CD4-positive, alpha-beta memory T cell (primary cell): ENCODE measurements at regions of chr1 and their contacts with region 1.

Region 1: DNA sequence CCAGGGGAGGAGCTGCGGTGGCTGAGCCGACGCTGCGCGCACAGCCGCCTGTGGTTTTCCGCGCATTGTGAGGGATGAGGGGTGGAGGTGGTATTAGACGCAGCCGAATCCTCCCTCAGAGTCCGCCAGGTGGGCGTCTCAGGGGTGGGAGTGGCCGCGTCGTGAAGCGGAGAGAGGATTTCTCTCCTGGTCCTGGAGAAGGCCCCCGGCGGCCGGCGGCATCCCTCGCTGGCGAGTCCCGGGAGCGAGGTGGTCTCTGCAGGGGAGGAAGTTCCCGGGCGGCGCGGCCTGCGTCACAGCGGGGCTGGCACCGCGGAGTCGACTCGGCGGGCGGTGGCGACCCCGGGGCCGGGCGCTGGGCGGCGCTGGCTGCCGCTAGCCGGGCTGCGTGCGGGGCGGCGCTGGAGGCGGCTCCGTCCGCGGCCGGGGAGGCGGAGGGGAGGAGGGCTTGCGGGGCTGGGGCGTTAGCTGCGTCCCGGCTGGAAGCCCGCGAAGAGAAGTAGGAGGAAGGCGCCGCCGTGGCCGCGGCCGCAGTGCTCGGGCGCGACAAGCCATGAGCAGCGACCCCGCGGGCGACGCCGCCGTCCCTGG is at the start of gene LRRC8C:
- DNase-seq: peak; percentile 90 to 95 (median 92)
- H3K4me3 ChIP-seq: peak within 1 kb of the TSS; percentile 73 to 89
- H3K4me3 Mint-ChIP-seq: peak within 1 kb of the TSS; percentile 96 to 99 (median 98)
- H3K27ac ChIP-seq: peak within 1 kb of the TSS; percentile 96
- H3K27ac Mint-ChIP-seq: peak within 1 kb of the TSS; percentile 96 to 99 (median 98)
- H3K4me1 ChIP-seq: peaks cover 76% of the 10 kb centered on the region
- H3K4me1 Mint-ChIP-seq: peaks cover 60 to 90% (median 74%) of the 10 kb centered on the region in 4 donors
- H3K27me3 ChIP-seq: no peaks in the 10 kb centered on the region
- H3K27me3 Mint-ChIP-seq: no peaks in the 10 kb centered on the region
- total RNA-seq, gene LRRC8C: 56.7 to 57.1 TPM

Region 2: GRCh38 chr1:89598450-89599331 is 34.1 kb before region 1 on chr1:
- CTCF ChIA-PET with region 1: interaction called, 688 read pairs
- POLR2A ChIA-PET with region 1: interaction called, 813 read pairs
- intact Hi-C with region 1: no loop called
- DNase-seq: peak in 4 of 5 donors; percentile 32 to 49 (median 38)
- H3K4me3 ChIP-seq: no peak overlapping the region
- H3K4me3 Mint-ChIP-seq: peak overlapping the region in 5 of 8 donors; percentile 37 to 79 (median 45)
- H3K27ac ChIP-seq: no peak overlapping the region
- H3K27ac Mint-ChIP-seq: peak overlapping the region; percentile 19 to 81 (median 71)
- H3K4me1 ChIP-seq: peaks cover 64% of the 10 kb centered on the region
- H3K4me1 Mint-ChIP-seq: peaks cover 55 to 82% (median 74%) of the 10 kb centered on the region in 4 donors
- H3K27me3 ChIP-seq: no peaks in the 10 kb centered on the region
- H3K27me3 Mint-ChIP-seq: no peaks in the 10 kb centered on the region

Region 3: DNA sequence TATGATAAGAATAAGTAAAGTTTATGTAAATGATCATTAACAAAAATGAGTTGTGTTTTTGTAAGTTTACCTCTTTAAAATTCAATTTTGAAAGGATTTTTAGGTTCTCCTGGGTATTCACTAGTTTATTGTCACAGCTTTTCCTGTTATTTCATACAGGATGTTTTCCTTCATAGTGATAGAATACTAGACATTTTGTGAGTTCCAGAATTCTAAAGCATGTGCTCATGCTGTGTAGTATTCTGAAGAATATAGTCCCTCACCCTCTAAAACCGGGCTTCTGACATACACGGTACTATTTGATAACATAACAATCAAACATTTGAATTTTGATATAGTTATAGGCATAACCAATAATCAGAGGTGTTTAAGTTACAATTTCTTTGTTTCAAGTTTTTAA is 10.8 kb after region 1 on chr1:
- CTCF ChIA-PET with region 1: interaction called, 5 read pairs
- POLR2A ChIA-PET with region 1: interaction called, 257 read pairs
- intact Hi-C with region 1: loop called (anchors 1 kb)
- DNase-seq: no peak
- H3K4me3 ChIP-seq: no peak overlapping the region
- H3K4me3 Mint-ChIP-seq: peak overlapping the region in 3 of 8 donors; percentile 14 to 61 (median 54)
- H3K27ac ChIP-seq: peak overlapping the region; percentile 3
- H3K27ac Mint-ChIP-seq: peak overlapping the region in 4 of 7 donors; percentile 6 to 59 (median 48)
- H3K4me1 ChIP-seq: peaks cover 64% of the 10 kb centered on the region
- H3K4me1 Mint-ChIP-seq: peaks cover 35 to 70% (median 58%) of the 10 kb centered on the region in 4 donors
- H3K27me3 ChIP-seq: no peaks in the 10 kb centered on the region
- H3K27me3 Mint-ChIP-seq: no peaks in the 10 kb centered on the region

Region 4: DNA sequence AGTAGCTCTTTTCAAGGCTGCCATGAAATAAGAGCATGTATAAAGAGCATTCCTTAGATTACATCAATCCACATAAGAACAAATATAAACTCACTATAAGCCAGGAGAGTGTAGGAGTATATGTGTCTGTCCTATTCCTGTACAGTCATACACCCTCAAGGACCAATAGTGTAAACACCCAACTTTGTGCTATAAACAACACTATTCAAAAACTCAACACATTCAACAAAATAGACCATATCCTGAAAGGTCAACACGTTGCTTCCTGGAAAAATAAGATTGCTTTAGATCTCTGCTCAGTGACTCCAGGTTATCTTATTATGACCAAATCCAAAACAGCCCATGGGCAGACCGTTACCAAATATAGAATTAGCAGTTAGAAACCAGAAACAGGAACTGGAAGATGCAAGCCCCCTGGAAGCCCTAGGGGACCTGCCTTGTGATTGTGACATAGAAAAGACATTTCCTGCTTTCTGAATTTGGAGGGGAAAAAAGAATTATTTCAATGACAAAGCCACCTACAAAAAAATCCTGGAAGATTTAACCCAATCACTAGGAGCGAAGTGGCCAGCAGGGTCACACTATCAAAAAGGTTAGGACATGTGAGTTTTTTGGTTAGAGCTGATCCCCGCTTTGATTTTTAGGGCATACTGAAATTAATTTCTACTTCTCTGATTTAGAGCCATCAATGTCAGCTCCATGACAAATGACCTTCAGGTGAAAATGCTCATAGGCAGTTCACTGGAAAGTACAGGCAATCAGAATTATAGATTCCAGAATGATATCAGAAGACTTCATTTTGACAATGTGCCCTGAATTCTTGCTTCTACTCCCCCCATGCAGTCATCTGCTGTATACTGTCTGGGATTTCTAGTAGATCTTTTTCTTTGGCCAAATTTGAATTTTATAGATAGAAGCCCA is 60.1 kb after region 1 on chr1:
- CTCF ChIA-PET with region 1: interaction called, 10 read pairs
- POLR2A ChIA-PET with region 1: interaction called, 50 read pairs
- intact Hi-C with region 1: loop called (anchors 1 kb)
- DNase-seq: no peak
- H3K4me3 ChIP-seq: no peak overlapping the region
- H3K4me3 Mint-ChIP-seq: peak overlapping the region in 5 of 8 donors; percentile 20 to 57 (median 43)
- H3K27ac ChIP-seq: no peak overlapping the region
- H3K27ac Mint-ChIP-seq: peak overlapping the region; percentile 72 to 88 (median 75)
- H3K4me1 ChIP-seq: peaks cover 70% of the 10 kb centered on the region
- H3K4me1 Mint-ChIP-seq: peaks cover 67 to 93% (median 79%) of the 10 kb centered on the region in 4 donors
- H3K27me3 ChIP-seq: no peaks in the 10 kb centered on the region
- H3K27me3 Mint-ChIP-seq: no peaks in the 10 kb centered on the region

Region 5: GRCh38 chr1:89855413-89856123 is 222.8 kb after region 1 on chr1:
- CTCF ChIA-PET with region 1: no interaction called
- POLR2A ChIA-PET with region 1: no interaction called
- intact Hi-C with region 1: loop called (anchors 5 kb)
- DNase-seq: peak; percentile 65 to 82 (median 77)
- H3K4me3 ChIP-seq: peak overlapping the region in 1 of 2 donors; percentile 21
- H3K4me3 Mint-ChIP-seq: peak overlapping the region in 3 of 8 donors; percentile 74 to 82 (median 77)
- H3K27ac ChIP-seq: peak overlapping the region; percentile 65
- H3K27ac Mint-ChIP-seq: no peak overlapping the region
- H3K4me1 ChIP-seq: peaks cover 44% of the 10 kb centered on the region
- H3K4me1 Mint-ChIP-seq: peaks cover 11 to 22% (median 14%) of the 10 kb centered on the region in 4 donors
- H3K27me3 ChIP-seq: no peaks in the 10 kb centered on the region
- H3K27me3 Mint-ChIP-seq: peaks cover 0 to 1% of the 10 kb centered on the region in 2 donors